AG04450 (cell line): ENCODE measurements at regions of chrX and their contacts with region 1.

Region 1: DNA sequence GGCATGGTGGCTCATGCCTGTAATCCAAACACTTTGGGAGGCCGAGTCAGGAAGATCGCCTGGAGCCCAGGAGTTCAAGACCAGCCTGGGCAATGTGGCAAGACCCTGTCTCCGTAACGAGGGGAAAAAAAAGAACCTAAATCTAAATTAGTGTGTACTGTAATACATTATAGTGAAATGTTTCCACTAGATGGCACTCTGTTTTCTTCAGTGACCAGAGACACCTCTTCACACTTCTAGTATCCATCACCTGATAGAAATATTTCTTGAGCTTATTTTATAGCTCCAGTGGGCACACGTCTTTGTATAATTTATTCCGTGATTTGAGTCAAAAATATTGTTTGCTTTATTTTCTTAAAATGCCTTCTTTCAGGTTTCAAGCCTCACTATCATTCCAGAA is 600.9 kb upstream of the DIPK2B start:
- DNase-seq: no peak
- H3K4me3 ChIP-seq: no peak overlapping the region
- H3K27ac ChIP-seq: no peak overlapping the region
- H3K27me3 ChIP-seq: no peaks in the 10 kb centered on the region
- CTCF ChIP-seq: no peak

Region 2: GRCh38 chrX:45788941-45789348 is 12.6 kb before region 1 on chrX:
- CTCF ChIA-PET with region 1: interaction called, 10 read pairs
- POLR2A ChIA-PET with region 1: interaction called, 4 read pairs
- DNase-seq: no peak
- H3K4me3 ChIP-seq: no peak overlapping the region
- H3K27ac ChIP-seq: peak overlapping the region; percentile 65
- H3K27me3 ChIP-seq: no peaks in the 10 kb centered on the region
- CTCF ChIP-seq: no peak